Gastrocnemius medialis (tissue), 4 donors: ENCODE measurements at regions of chr1 and their contacts with region 1.

Region 1: DNA sequence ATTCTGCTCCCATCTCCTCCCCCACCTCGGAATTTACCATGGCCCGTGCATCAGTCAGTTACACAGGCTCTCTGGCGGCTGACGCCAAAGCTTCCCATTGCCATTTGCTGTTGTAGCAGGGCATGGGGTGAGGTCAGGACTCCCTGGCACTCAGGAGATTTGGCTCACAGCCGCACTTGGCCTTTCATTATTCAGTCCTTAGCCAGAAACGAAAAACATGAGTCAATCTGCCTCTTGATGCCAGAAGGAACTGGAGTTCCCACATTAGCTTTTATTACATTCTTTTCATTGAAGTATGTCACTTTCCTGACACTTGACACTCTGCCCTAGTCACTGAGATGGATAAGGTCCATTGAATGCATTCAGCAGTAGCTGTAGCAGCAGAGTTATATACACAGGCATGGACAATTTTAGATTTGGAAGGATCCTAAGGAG is 260.6 kb downstream of the CACNA1E start:
- DNase-seq: peak in 1 of 2 donors; percentile 12
- ATAC-seq: peak; percentile 27 to 42
- H3K4me3 ChIP-seq: no peak overlapping the region
- H3K27ac ChIP-seq: no peak overlapping the region
- H3K4me1 ChIP-seq: no peaks in the 10 kb centered on the region
- H3K27me3 ChIP-seq: no peaks in the 10 kb centered on the region
- CTCF ChIP-seq: no peak
- POLR2A ChIP-seq: no peak

Region 2: DNA sequence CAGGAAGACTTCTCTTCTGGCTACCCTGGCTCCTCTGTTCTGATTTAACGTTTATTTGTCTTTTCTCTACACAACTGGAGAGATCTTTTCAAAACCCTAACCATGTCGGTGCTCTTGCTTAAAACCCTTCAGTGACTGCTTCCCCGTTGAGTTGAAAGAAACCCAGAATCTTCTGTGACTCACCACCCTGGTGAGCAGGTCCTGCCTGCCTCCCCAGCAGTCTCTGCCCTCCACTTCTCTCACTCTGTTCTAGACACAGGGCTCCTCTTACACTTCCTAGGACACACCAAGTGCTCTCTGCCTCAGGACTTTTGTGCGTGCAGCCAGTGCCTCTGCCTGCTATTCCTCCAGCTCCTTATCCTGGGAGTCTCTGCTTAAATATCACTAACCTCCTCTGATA is 524.0 kb before region 1 on chr1:
- in situ Hi-C with region 1: no loop called
- intact Hi-C with region 1: no loop called
- DNase-seq: no peak
- ATAC-seq: no peak
- H3K4me3 ChIP-seq: no peak overlapping the region
- H3K27ac ChIP-seq: no peak overlapping the region
- H3K4me1 ChIP-seq: no peaks in the 10 kb centered on the region
- H3K27me3 ChIP-seq: peaks cover 0 to 4% (median 0%) of the 10 kb centered on the region in 3 donors
- CTCF ChIP-seq: no peak
- POLR2A ChIP-seq: no peak

Region 3: DNA sequence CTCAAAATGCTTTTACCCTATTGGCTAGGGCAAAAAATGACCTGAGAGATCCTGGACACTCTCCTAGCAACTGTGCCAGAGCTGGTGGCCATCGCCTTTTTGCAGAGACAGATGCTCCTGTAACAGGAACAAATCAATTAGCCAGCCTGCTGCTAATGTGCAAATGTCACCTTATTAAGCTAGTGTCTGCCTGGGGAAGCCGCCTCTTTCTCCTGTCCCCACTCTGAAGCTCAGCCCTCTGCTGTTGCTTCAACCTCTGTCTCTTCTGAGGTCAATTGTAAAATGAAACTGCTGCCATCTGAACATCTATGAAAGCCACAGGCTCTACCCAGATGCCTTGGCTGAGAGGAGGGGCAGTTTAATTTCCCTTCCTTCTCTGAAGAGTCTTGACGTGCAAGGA is 346.1 kb before region 1 on chr1:
- in situ Hi-C with region 1: no loop called
- intact Hi-C with region 1: no loop called
- DNase-seq: no peak
- ATAC-seq: no peak
- H3K4me3 ChIP-seq: no peak overlapping the region
- H3K27ac ChIP-seq: no peak overlapping the region
- H3K4me1 ChIP-seq: no peaks in the 10 kb centered on the region
- H3K27me3 ChIP-seq: no peaks in the 10 kb centered on the region
- CTCF ChIP-seq: no peak
- POLR2A ChIP-seq: no peak

Region 4: GRCh38 chr1:181936768-181937581 is 193.1 kb after region 1 on chr1:
- in situ Hi-C with region 1: no loop called
- intact Hi-C with region 1: loop called (anchors 10 kb)
- DNase-seq: no peak
- ATAC-seq: no peak
- H3K4me3 ChIP-seq: no peak overlapping the region
- H3K27ac ChIP-seq: no peak overlapping the region
- H3K4me1 ChIP-seq: no peaks in the 10 kb centered on the region
- H3K27me3 ChIP-seq: no peaks in the 10 kb centered on the region
- CTCF ChIP-seq: peak in 3 of 5 experiments; percentile 27 to 30 (median 30)
- POLR2A ChIP-seq: no peak